Breast epithelium (tissue), 4 donors: ENCODE measurements at regions of chr9 and their contacts with region 1.

Region 1: GRCh38 chr9:24793787-24794186 is 248.1 kb upstream of the IZUMO3 start:
- DNase-seq: no peak
- H3K4me3 ChIP-seq: no peak overlapping the region
- H3K27ac ChIP-seq: no peak overlapping the region
- H3K4me1 ChIP-seq: no peaks in the 10 kb centered on the region
- H3K27me3 ChIP-seq: no peaks in the 10 kb centered on the region
- CTCF ChIP-seq: no peak
- POLR2A ChIP-seq: no peak

Region 2: DNA sequence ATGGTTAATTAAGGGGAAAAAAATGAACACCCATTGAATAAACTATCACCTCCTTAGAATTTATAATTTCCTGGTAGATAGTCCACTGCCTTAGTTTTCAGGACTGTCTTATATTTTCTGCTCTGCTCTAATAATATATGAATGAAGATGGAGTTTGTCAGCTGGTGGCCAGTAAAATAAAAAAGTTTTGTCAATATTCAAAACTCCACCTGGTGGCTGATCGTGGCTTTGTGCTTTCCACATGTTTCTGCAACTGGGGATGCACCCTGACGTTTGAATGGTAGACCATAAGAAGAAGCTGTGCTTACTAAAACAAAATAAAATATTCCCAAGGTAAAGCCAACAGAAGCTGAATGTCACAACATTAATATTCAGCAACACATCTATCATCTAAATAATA is 38.5 kb after region 1 on chr9:
- intact Hi-C with region 1: loop called (anchors 2 kb)
- DNase-seq: no peak
- H3K4me3 ChIP-seq: no peak overlapping the region
- H3K27ac ChIP-seq: no peak overlapping the region
- H3K4me1 ChIP-seq: no peaks in the 10 kb centered on the region
- H3K27me3 ChIP-seq: no peaks in the 10 kb centered on the region
- CTCF ChIP-seq: peak in 1 of 3 donors; percentile 18
- POLR2A ChIP-seq: no peak

Region 3: DNA sequence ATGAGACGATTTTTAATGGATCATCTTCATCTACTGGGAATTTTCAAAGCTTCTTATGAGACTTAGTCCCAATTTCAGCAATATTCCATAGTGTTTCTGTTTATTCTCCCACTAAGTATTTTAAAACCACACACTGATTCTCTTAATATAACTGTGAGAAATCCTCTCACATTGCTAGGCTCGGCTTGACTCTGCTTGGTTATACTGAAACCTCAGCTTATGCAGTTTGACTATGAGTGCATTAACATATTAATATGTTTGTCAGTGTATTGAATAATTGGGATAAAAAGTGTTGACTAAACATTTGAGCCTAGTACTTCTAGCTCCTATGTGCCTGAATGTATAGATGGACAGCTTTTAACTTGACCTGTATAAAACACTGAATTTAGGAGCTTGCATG is 50.4 kb after region 1 on chr9:
- intact Hi-C with region 1: loop called (anchors 2 kb)
- DNase-seq: no peak
- H3K4me3 ChIP-seq: no peak overlapping the region
- H3K27ac ChIP-seq: no peak overlapping the region
- H3K4me1 ChIP-seq: no peaks in the 10 kb centered on the region
- H3K27me3 ChIP-seq: no peaks in the 10 kb centered on the region
- CTCF ChIP-seq: no peak
- POLR2A ChIP-seq: no peak